Left colon (tissue), 2 donors: ENCODE measurements at regions of chr1 and their contacts with region 1.

Region 1: GRCh38 chr1:94045465-94046056 is 75.4 kb downstream of the ABCA4 start:
- DNase-seq: peak; percentile 55 to 61
- ATAC-seq: peak; percentile 87

Region 2: DNA sequence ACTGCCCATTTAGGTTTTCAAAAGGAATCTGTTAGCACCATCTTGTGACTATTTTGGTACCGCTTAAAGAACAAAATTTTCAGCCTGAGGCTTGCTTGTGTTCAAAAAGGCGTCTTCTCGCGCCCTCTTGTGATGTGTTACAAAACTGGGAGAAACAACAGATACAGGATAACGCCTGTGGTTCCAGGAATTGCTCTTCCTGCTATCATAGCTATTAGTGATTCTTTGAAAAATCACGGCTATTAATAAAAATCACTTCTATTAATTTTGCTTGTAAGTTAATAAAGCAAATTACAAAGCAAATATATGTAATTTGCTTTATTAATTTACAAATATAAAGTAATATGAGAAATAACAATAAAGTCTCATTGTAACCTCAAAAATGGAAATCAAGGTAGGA is 290.4 kb after region 1 on chr1:
- intact Hi-C with region 1: loop called (anchors 5 to 10 kb)
- DNase-seq: peak; percentile 68 to 69
- ATAC-seq: peak; percentile 98